ENCODE measurements at regions of chr1 and their contacts with region 1.

Region 1: DNA sequence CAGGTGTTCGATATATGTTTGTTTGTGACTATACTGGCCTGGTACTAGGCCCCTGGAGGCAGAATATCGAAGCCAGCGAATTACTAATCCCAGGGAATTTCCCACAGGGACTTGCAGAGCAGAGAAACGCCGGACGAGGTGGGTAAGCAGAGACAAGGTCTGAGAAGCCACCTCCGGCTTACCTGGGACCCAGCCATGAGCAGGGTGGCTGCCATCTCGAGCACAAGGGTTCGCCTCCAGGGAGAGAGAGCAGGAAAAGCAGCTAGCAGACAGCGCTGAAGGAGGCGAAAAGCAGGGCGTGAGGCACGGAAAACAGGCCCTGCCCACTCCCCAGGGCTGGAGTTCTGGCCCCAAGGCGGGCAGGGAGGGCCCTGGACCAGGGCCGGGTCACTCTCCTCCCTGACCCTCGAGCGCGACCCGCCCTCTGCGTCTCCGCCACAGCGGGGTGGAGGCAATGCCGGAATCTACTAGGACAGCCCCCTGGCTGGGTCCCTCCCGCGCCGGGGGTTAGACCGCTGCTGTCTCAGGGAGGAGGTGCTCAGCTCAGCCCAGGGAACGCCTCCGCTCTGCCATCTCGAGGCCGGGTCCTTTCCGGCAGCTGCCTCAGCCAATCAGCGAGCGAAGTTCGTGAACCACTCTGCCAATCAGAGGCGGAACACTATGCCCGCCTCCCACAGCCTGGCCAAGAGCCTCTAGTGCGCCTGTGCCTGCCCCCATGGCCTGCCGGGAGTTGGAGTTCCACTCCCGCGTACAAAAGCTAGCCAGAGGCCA is 1.7 kb downstream of the ZNF436 start:
- DNase-seq: peak; percentile 99
- H3K4me3 ChIP-seq: peak overlapping the region; percentile 82 to 88
- H3K27ac ChIP-seq: peak overlapping the region; percentile 99
- H3K4me1 ChIP-seq: peaks cover 18% of the 10 kb centered on the region
- H3K27me3 ChIP-seq: no peaks in the 10 kb centered on the region
- CTCF ChIP-seq: peak in 2 of 4 experiments; percentile 30 to 50
- POLR2A ChIP-seq: peak; percentile 96

Region 2: GRCh38 chr1:23344111-23344986 is 23.6 kb before region 1 on chr1 and contains the start of gene HNRNPR:
- intact Hi-C with region 1: loop called (anchors 2 kb)
- DNase-seq: peak; percentile 100
- H3K4me3 ChIP-seq: peak within 1 kb of the TSS; percentile 95 to 98
- H3K27ac ChIP-seq: peak within 1 kb of the TSS; percentile 85 to 97
- H3K4me1 ChIP-seq: no peaks in the 10 kb centered on the region
- H3K27me3 ChIP-seq: no peaks in the 10 kb centered on the region
- CTCF ChIP-seq: peak in 2 of 4 experiments; percentile 33 to 49
- POLR2A ChIP-seq: peak; percentile 93
- total RNA-seq, gene HNRNPR: 85.8 to 88.1 TPM